Mammary epithelial cell (primary cell): ENCODE measurements at regions of chr5 and their contacts with region 1.

Region 1: GRCh38 chr5:141557681-141558136 is 61.1 kb downstream of the DIAPH1 start:
- DNase-seq: peak; percentile 99
- H3K4me3 ChIP-seq: peak overlapping the region; percentile 4 to 9 (median 4)
- H3K27ac ChIP-seq: peak overlapping the region; percentile 97
- H3K4me1 ChIP-seq: peaks cover 31% of the 10 kb centered on the region
- H3K27me3 ChIP-seq: no peaks in the 10 kb centered on the region
- CTCF ChIP-seq: peak; percentile 80 to 82

Region 2: GRCh38 chr5:141094481-141095262 is 463.0 kb before region 1 on chr5 and contains the start of gene PCDHB2:
- CTCF ChIA-PET with region 1: no interaction called
- dilution Hi-C with region 1: no loop called
- in situ Hi-C with region 1: loop called in 1 of 2 experiments (anchors 10 kb)
- intact Hi-C with region 1: loop called (anchors 1 kb)
- DNase-seq: peak; percentile 71
- H3K4me3 ChIP-seq: peak within 1 kb of the TSS; percentile 58 to 69 (median 59)
- H3K27ac ChIP-seq: peak within 1 kb of the TSS; percentile 32
- H3K4me1 ChIP-seq: no peaks in the 10 kb centered on the region
- H3K27me3 ChIP-seq: no peaks in the 10 kb centered on the region
- CTCF ChIP-seq: peak; percentile 49 to 57
- total RNA-seq, gene PCDHB2: 2.2 to 6.8 TPM

Region 3: GRCh38 chr5:141192110-141192732 is 365.5 kb before region 1 on chr5 and contains the start of gene PCDHB10:
- CTCF ChIA-PET with region 1: no interaction called
- dilution Hi-C with region 1: no loop called
- in situ Hi-C with region 1: no loop called
- intact Hi-C with region 1: loop called (anchors 1 kb)
- DNase-seq: peak; percentile 40
- H3K4me3 ChIP-seq: peak within 1 kb of the TSS in 2 of 3 experiments; percentile 26 to 29
- H3K27ac ChIP-seq: no peak within 1 kb of the TSS
- H3K4me1 ChIP-seq: no peaks in the 10 kb centered on the region
- H3K27me3 ChIP-seq: no peaks in the 10 kb centered on the region
- CTCF ChIP-seq: peak; percentile 63 to 71
- total RNA-seq, gene PCDHB10: 0.56 to 1.0 TPM

Region 4: DNA sequence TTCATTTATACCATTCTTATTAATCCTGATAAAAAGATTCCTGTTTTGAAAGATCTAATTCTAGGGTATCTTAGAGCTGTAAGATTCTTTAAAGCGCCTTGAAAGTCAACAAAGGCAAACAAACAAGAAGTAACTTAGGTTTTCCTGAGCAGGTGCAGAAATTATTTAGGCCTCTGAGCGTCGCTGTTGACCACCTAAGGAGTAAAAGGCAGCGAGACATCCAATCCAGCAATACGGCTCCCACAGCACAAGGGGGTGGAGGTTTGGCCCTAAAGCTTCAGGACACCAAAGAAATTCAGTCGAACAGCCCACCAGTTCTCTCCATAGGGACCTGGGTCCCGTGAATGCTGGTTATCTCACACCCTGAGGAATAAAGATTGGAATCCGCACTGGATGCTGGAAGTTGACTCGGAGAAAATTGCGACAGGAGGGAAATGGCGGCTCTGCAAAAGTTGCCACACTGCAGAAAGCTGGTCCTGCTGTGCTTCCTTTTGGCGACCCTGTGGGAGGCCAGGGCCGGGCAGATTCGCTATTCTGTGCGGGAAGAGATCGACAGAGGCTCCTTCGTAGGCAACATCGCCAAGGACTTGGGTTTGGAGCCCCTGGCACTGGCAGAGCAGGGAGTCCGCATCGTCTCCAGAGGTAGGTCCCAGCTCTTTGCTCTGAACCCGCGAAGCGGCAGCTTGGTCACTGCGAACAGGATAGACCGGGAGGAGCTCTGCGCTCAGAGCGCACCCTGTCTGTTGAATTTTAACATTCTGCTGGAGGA is 219.0 kb before region 1 on chr5 and contains the start of gene PCDHGA2:
- CTCF ChIA-PET with region 1: no interaction called
- dilution Hi-C with region 1: no loop called
- in situ Hi-C with region 1: no loop called
- intact Hi-C with region 1: loop called (anchors 2 kb)
- DNase-seq: peak; percentile 37
- H3K4me3 ChIP-seq: peak within 1 kb of the TSS; percentile 46 to 57 (median 46)
- H3K27ac ChIP-seq: no peak within 1 kb of the TSS
- H3K4me1 ChIP-seq: no peaks in the 10 kb centered on the region
- H3K27me3 ChIP-seq: no peaks in the 10 kb centered on the region
- CTCF ChIP-seq: peak; percentile 65 to 71
- total RNA-seq, gene PCDHGA2: 1.7 to 3.0 TPM

Region 5: DNA sequence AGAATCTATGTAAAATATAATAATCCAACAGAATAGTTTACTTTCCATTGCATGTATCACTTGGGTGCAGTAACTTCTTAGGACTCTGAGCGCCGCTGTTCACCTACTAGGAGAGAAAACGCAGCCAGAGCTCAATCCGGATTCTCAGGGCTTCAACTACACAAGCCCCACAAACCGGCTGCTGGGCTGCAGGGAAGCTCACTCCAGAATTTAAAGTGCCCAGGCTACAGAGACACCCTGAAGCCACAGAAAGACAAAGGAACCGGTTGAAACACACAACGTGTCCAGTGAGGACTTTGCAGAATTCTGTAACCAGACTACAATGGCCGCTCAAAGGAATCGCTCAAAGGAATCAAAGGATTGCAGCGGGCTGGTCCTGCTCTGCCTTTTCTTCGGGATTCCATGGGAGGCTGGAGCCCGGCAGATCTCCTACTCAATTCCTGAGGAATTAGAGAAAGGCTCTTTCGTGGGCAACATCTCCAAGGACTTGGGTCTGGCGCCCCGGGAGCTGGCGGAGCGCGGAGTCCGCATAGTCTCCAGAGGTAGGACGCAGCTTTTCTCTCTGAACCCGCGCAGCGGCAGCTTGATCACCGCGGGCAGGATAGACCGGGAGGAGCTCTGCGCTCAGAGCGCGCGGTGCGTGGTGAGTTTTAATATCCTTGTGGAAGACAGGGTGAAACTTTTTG is 144.7 kb before region 1 on chr5 and contains the start of gene PCDHGA10:
- CTCF ChIA-PET with region 1: interaction called, 13 read pairs
- dilution Hi-C with region 1: no loop called
- in situ Hi-C with region 1: no loop called
- intact Hi-C with region 1: loop called (anchors 1 kb)
- DNase-seq: peak; percentile 34
- H3K4me3 ChIP-seq: no peak within 1 kb of the TSS
- H3K27ac ChIP-seq: no peak within 1 kb of the TSS
- H3K4me1 ChIP-seq: no peaks in the 10 kb centered on the region
- H3K27me3 ChIP-seq: no peaks in the 10 kb centered on the region
- CTCF ChIP-seq: no peak
- total RNA-seq, gene PCDHGA10: 7.8 to 7.9 TPM

Region 6: DNA sequence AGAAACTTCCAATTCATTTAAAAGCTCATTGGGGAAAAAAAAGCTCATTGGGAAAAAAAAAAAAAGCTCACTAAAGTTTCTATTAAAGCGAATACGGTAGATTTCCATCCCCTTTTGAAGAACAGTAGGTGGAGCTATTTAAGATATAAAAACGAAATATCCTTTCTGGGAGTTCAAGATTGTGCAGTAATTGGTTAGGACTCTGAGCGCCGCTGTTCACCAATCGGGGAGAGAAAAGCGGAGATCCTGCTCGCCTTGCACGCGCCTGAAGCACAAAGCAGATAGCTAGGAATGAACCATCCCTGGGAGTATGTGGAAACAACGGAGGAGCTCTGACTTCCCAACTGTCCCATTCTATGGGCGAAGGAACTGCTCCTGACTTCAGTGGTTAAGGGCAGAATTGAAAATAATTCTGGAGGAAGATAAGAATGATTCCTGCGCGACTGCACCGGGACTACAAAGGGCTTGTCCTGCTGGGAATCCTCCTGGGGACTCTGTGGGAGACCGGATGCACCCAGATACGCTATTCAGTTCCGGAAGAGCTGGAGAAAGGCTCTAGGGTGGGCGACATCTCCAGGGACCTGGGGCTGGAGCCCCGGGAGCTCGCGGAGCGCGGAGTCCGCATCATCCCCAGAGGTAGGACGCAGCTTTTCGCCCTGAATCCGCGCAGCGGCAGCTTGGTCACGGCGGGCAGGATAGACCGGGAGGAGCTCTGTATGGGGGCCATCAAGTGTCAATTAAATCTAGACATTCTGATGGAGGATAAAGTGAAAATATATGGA is 127.2 kb before region 1 on chr5 and contains the start of gene PCDHGA12:
- CTCF ChIA-PET with region 1: interaction called, 6 read pairs
- dilution Hi-C with region 1: loop called (anchors 10 kb)
- in situ Hi-C with region 1: no loop called
- intact Hi-C with region 1: loop called (anchors 1 kb)
- DNase-seq: peak; percentile 82
- H3K4me3 ChIP-seq: peak within 1 kb of the TSS in 2 of 3 experiments; percentile 3 to 17
- H3K27ac ChIP-seq: no peak within 1 kb of the TSS
- H3K4me1 ChIP-seq: no peaks in the 10 kb centered on the region
- H3K27me3 ChIP-seq: no peaks in the 10 kb centered on the region
- CTCF ChIP-seq: peak; percentile 58 to 65
- total RNA-seq, gene PCDHGA12: 3.2 to 24.5 TPM

Region 7: DNA sequence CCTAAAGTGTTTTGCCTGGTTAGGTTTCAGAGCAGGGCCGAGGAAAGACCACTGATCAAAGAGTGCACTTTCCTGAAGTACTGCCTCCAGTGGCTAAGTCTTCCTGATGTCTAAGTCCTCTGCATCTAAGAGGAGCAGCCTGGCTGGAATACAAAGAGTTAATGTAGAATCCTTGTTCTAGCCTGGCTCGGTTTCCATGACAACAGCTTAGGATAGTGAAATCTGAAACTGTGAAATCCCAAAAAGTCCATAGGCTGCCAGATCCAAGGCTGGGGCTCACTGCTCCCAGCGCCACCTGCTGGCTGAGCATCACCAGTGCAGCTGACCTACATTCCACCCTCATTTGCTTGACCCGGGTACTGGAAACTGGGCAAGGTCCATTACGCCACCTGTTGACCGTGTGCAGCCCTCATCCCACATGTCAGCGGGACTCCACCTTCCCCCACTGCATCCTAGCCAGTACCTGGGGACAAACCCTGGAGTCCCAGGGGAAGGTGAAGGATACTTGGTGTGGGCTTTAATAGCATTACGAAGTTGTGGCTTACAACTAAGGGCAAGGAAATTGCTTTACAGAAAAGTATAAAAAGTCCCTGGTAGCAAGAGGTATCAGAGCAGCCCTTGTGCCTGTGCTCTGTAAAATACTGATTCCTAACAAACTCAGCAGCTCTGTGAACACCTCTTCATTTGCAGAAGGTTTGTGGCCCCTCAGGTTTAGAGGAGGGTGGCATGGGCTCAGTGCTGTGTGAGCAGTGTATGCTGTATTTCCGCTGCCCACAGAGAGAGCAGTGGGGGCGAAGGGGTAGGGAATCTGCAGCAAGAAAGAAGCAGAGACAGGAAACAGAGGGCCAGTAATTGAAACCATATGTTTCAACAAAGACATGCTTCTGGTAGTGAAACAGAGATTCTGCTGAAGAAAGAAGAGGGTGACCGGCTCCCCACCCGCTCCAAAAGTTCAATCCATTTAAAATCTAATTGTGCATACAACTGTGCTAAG is 32.8 kb before region 1 on chr5:
- CTCF ChIA-PET with region 1: interaction called, 5 read pairs
- dilution Hi-C with region 1: no loop called
- in situ Hi-C with region 1: no loop called
- intact Hi-C with region 1: loop called (anchors 1 kb)
- DNase-seq: peak; percentile 90
- H3K4me3 ChIP-seq: no peak overlapping the region
- H3K27ac ChIP-seq: peak overlapping the region; percentile 74
- H3K4me1 ChIP-seq: peaks cover 51% of the 10 kb centered on the region
- H3K27me3 ChIP-seq: no peaks in the 10 kb centered on the region
- CTCF ChIP-seq: peak; percentile 99 to 100

Region 8: DNA sequence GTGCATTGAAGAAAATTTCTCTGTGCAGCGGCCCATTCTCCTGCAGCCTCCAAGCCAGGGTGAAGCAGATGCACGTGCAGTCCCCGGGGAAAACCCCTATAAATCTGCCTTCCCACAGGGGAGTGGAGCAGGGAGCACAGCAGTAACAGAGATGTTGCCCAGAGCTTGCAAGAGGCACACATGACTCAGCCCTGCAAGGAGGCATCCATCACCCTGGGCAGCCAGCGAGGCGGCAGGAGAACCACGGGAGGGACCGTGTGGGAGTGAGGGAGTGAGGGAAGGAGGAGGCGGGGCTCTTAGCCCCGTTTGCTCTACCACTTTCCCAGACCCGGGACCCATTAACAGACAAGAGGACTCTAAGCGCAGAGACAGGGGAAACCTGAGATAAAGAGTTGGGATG is 220.5 kb after region 1 on chr5:
- CTCF ChIA-PET with region 1: no interaction called
- dilution Hi-C with region 1: no loop called
- in situ Hi-C with region 1: no loop called
- intact Hi-C with region 1: no loop called
- DNase-seq: peak; percentile 62
- H3K4me3 ChIP-seq: no peak overlapping the region
- H3K27ac ChIP-seq: no peak overlapping the region
- H3K4me1 ChIP-seq: peaks cover 6% of the 10 kb centered on the region
- H3K27me3 ChIP-seq: no peaks in the 10 kb centered on the region
- CTCF ChIP-seq: no peak

Region 9: GRCh38 chr5:141866149-141867120 is 308.7 kb after region 1 on chr5:
- CTCF ChIA-PET with region 1: no interaction called
- dilution Hi-C with region 1: no loop called
- in situ Hi-C with region 1: no loop called
- intact Hi-C with region 1: no loop called
- DNase-seq: peak; percentile 94
- H3K4me3 ChIP-seq: no peak overlapping the region
- H3K27ac ChIP-seq: peak overlapping the region; percentile 79
- H3K4me1 ChIP-seq: peaks cover 53% of the 10 kb centered on the region
- H3K27me3 ChIP-seq: no peaks in the 10 kb centered on the region
- CTCF ChIP-seq: no peak